Natural killer cell (primary cell): ENCODE measurements at regions of chr4 and their contacts with region 1.

Region 1: DNA sequence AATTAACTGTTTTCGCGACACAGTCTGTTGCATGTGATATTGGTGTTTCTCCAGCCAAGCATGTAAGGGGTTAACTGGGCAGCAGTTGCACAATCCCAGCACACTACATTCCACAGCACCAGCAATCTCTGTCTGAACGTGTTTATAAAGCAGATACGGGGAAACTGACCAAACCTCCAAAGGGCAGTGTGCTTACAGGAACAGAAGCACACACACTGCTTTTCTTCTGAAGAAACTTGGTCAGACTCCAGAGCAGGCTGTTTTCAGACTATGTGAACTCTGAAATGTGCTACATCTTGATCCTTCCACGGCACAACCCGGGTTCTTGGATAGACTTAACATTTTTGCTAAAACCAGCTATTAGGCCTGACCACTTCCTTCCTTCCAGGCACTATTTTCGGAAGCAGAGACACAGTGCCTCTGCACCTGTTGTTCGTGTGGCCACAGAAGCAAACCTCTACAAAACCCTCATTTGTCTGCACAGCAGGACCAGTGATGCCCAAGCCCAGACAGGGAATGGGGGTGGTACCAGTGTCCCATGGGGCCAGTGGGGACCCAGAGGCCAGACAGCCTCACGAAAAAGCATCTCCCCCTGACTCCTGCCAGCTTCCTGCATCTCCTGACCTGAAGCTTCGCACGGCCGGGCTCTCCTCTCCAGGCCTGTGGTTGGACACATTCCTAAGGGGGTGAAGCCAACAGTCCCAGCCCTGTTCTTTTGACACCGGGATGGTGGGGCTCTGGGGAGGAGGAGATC is 90.1 kb downstream of the IRF2 start:
- DNase-seq: peak in 1 of 2 donors; percentile 33
- ATAC-seq: peak; percentile 25 to 58 (median 30)
- H3K4me3 ChIP-seq: peak overlapping the region; percentile 3
- H3K4me3 Mint-ChIP-seq: peak overlapping the region; percentile 61
- H3K27ac ChIP-seq: peak overlapping the region; percentile 12
- H3K27ac Mint-ChIP-seq: peak overlapping the region; percentile 56 to 82
- H3K4me1 ChIP-seq: peaks cover 45% of the 10 kb centered on the region
- H3K4me1 Mint-ChIP-seq: peaks cover 46 to 53% of the 10 kb centered on the region in 2 donors
- H3K27me3 ChIP-seq: no peaks in the 10 kb centered on the region
- H3K27me3 Mint-ChIP-seq: no peaks in the 10 kb centered on the region
- CTCF ChIP-seq: no peak

Region 2: GRCh38 chr4:183312831-183313230 is 1071.4 kb before region 1 on chr4:
- intact Hi-C with region 1: no loop called
- DNase-seq: no peak
- ATAC-seq: no peak
- H3K4me3 ChIP-seq: no peak overlapping the region
- H3K4me3 Mint-ChIP-seq: no peak overlapping the region
- H3K27ac ChIP-seq: no peak overlapping the region
- H3K27ac Mint-ChIP-seq: no peak overlapping the region
- H3K4me1 ChIP-seq: no peaks in the 10 kb centered on the region
- H3K4me1 Mint-ChIP-seq: no peaks in the 10 kb centered on the region
- H3K27me3 ChIP-seq: no peaks in the 10 kb centered on the region
- H3K27me3 Mint-ChIP-seq: peaks cover 20 to 53% of the 10 kb centered on the region in 2 donors
- CTCF ChIP-seq: no peak

Region 3: GRCh38 chr4:184343502-184344177 is 40.6 kb before region 1 on chr4:
- intact Hi-C with region 1: loop called (anchors 5 kb)
- DNase-seq: peak in 1 of 2 donors; percentile 61
- ATAC-seq: peak; percentile 50 to 65 (median 59)
- H3K4me3 ChIP-seq: peak overlapping the region; percentile 43
- H3K4me3 Mint-ChIP-seq: peak overlapping the region; percentile 89
- H3K27ac ChIP-seq: no peak overlapping the region
- H3K27ac Mint-ChIP-seq: peak overlapping the region; percentile 82 to 85
- H3K4me1 ChIP-seq: peaks cover 41% of the 10 kb centered on the region
- H3K4me1 Mint-ChIP-seq: peaks cover 52% of the 10 kb centered on the region in 2 donors
- H3K27me3 ChIP-seq: no peaks in the 10 kb centered on the region
- H3K27me3 Mint-ChIP-seq: no peaks in the 10 kb centered on the region
- CTCF ChIP-seq: no peak

Region 4: DNA sequence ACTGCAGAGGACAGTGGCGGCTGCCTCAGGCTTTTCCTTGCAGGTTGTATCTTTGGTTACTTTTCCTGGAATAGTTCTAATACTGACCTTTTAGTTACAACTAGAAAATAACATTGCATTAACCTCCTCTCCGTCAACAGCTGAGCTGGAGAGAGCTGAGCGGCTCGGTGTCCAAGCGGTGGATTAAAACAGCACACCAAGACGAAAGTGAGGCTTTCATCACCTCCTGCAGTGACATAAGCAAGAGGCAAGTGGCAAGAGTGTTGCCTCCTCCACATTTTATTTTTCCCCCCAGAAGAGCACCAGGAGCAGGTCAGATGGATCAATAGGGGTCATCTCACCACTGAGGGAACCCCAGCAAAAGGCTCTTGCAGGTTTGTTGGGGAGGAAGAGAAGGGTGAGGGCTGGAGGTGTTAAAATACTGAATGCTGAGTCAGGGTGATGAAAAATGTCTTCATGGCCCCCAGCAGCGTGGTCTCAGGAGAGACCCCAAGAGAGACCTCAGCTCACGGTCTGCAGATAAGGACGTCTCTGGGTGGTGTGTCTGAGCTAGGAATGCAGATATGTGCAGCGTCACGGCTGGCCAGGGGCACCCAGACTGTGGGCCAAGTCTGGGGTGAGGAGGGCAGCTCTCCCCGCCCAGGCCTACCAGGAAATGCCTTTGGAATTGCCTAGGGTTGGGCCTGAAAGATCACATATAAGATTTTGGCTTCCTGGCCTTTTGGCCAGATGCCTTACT is 214.7 kb after region 1 on chr4:
- intact Hi-C with region 1: no loop called
- DNase-seq: no peak
- ATAC-seq: no peak
- H3K4me3 ChIP-seq: no peak overlapping the region
- H3K4me3 Mint-ChIP-seq: no peak overlapping the region
- H3K27ac ChIP-seq: no peak overlapping the region
- H3K27ac Mint-ChIP-seq: no peak overlapping the region
- H3K4me1 ChIP-seq: peaks cover 11% of the 10 kb centered on the region
- H3K4me1 Mint-ChIP-seq: peaks cover 0 to 7% of the 10 kb centered on the region in 2 donors
- H3K27me3 ChIP-seq: no peaks in the 10 kb centered on the region
- H3K27me3 Mint-ChIP-seq: peaks cover 7 to 39% of the 10 kb centered on the region in 2 donors
- CTCF ChIP-seq: no peak